Mammary epithelial cell (primary cell): ENCODE measurements at regions of chr4 and their contacts with region 1.

Region 1: GRCh38 chr4:76585897-76586360 is 150.9 kb downstream of the SHROOM3 start:
- DNase-seq: peak; percentile 95
- H3K4me3 ChIP-seq: peak overlapping the region; percentile 67 to 77 (median 67)
- H3K27ac ChIP-seq: peak overlapping the region; percentile 79
- H3K4me1 ChIP-seq: peaks cover 34% of the 10 kb centered on the region
- H3K27me3 ChIP-seq: no peaks in the 10 kb centered on the region
- CTCF ChIP-seq: peak in 1 of 2 donors; percentile 42

Region 2: GRCh38 chr4:76055016-76055415 is 530.9 kb before region 1 on chr4:
- CTCF ChIA-PET with region 1: no interaction called
- dilution Hi-C with region 1: no loop called
- in situ Hi-C with region 1: no loop called
- intact Hi-C with region 1: no loop called
- DNase-seq: no peak
- H3K4me3 ChIP-seq: no peak overlapping the region
- H3K27ac ChIP-seq: no peak overlapping the region
- H3K4me1 ChIP-seq: peaks cover 20% of the 10 kb centered on the region
- H3K27me3 ChIP-seq: no peaks in the 10 kb centered on the region
- CTCF ChIP-seq: no peak

Region 3: DNA sequence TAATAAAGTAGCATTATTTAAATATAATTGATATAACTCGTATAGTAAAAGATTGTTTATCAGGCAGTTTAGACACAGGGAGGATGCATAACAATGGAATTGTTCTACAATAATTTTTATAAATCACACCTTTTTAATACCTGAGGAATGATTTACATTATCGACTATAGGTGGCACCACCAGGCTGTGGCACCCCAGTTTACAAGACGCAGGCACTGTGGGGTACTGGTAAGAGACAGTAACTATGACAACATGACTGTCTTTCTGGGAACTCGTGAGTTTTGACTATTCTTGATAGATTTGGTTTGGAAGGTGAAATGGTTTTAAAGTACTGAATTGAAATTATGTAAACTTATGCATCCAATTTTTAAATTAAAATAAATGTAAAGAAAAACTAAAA is 306.5 kb before region 1 on chr4:
- CTCF ChIA-PET with region 1: no interaction called
- dilution Hi-C with region 1: no loop called
- in situ Hi-C with region 1: no loop called
- intact Hi-C with region 1: no loop called
- DNase-seq: no peak
- H3K4me3 ChIP-seq: no peak overlapping the region
- H3K27ac ChIP-seq: no peak overlapping the region
- H3K4me1 ChIP-seq: no peaks in the 10 kb centered on the region
- H3K27me3 ChIP-seq: peaks cover 1% of the 10 kb centered on the region
- CTCF ChIP-seq: peak in 1 of 2 donors; percentile 26

Region 4: GRCh38 chr4:76377911-76378310 is 208.0 kb before region 1 on chr4:
- CTCF ChIA-PET with region 1: no interaction called
- dilution Hi-C with region 1: no loop called
- in situ Hi-C with region 1: no loop called
- intact Hi-C with region 1: no loop called
- DNase-seq: no peak
- H3K4me3 ChIP-seq: no peak overlapping the region
- H3K27ac ChIP-seq: no peak overlapping the region
- H3K4me1 ChIP-seq: peaks cover 8% of the 10 kb centered on the region
- H3K27me3 ChIP-seq: no peaks in the 10 kb centered on the region
- CTCF ChIP-seq: peak; percentile 47 to 59

Region 5: DNA sequence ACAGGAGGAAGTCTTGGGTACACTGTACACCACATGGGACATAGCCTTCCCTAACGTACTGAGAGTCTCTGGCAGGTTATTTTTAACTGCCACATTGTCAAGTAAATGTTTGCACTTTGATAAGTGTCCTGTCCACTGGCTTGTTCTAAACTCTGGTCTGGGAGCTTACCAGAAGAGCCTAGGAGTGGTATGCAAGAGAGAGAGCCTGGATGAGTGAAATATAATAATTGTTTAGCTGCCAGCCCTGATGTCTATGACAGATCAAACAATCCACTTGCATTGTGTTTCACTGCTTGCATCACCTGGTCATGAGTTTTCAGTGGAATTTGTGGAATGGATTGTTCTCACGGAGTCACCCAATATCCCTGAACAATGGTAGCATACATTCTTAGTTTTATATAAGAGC is 59.3 kb before region 1 on chr4:
- CTCF ChIA-PET with region 1: no interaction called
- dilution Hi-C with region 1: no loop called
- in situ Hi-C with region 1: no loop called
- intact Hi-C with region 1: loop called (anchors 5 kb)
- DNase-seq: peak; percentile 76
- H3K4me3 ChIP-seq: no peak overlapping the region
- H3K27ac ChIP-seq: peak overlapping the region; percentile 60
- H3K4me1 ChIP-seq: peaks cover 17% of the 10 kb centered on the region
- H3K27me3 ChIP-seq: no peaks in the 10 kb centered on the region
- CTCF ChIP-seq: no peak

Region 6: DNA sequence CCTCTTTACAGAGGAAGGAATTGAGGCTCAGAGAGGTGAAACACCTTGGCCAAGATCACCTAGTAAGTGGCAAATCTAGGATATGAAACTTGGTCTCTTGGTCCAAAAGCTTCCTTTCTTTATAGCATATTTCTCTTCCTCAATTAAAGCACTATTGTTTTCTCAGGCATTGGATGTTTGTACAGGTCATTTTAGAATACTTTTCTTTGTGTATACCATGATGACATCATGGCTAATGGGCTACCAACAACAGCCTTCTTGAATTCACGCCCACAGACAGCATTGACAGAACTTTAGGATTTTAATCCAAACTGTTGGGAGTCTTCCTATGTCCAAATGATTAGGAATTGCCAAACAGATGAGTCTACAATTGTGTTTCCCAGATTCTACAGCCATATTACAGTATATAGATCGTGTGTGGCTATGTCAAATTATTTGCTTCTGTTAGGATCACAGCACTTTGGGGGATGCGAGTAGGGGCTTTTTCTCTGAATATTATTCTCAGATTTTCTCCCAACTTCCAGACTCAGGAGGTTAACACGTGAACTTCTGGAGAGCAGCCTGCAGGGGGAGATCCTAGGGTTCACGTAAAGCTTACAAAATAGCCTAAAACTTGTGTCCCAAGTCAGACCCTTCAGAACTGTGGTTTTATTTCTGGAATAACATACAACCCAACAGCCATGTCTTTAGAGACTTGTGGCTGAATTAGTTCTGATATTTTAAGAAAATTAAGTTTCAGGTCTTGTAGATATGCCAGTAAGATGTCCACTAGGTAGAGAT is 40.9 kb after region 1 on chr4:
- CTCF ChIA-PET with region 1: interaction called, 5 read pairs
- dilution Hi-C with region 1: no loop called
- in situ Hi-C with region 1: no loop called
- intact Hi-C with region 1: loop called (anchors 1 kb)
- DNase-seq: no peak
- H3K4me3 ChIP-seq: no peak overlapping the region
- H3K27ac ChIP-seq: no peak overlapping the region
- H3K4me1 ChIP-seq: peaks cover 38% of the 10 kb centered on the region
- H3K27me3 ChIP-seq: no peaks in the 10 kb centered on the region
- CTCF ChIP-seq: peak; percentile 21 to 33

Region 7: DNA sequence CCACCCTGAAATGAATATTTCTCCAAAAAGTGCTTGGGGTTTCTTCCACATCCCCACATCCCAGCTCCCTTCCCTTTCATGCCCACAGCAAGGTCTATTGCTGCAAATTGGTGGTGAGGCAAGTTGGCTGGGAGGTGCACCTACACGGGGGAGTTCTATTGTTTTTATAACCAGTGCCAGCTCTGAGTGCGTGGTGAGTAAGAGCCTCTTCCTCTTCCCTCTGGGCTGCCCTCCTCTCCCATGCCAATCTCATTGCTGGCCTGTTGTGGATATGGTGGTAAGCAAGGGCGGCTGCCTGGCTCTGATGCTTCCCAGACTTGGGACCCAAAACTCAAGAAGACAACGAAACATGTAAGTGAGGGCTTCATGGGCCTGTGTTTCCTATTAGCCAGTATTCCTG is 53.4 kb after region 1 on chr4:
- CTCF ChIA-PET with region 1: no interaction called
- dilution Hi-C with region 1: no loop called
- in situ Hi-C with region 1: no loop called
- intact Hi-C with region 1: loop called (anchors 2 kb)
- DNase-seq: peak; percentile 86
- H3K4me3 ChIP-seq: no peak overlapping the region
- H3K27ac ChIP-seq: peak overlapping the region; percentile 14
- H3K4me1 ChIP-seq: peaks cover 51% of the 10 kb centered on the region
- H3K27me3 ChIP-seq: no peaks in the 10 kb centered on the region
- CTCF ChIP-seq: no peak

Region 8: DNA sequence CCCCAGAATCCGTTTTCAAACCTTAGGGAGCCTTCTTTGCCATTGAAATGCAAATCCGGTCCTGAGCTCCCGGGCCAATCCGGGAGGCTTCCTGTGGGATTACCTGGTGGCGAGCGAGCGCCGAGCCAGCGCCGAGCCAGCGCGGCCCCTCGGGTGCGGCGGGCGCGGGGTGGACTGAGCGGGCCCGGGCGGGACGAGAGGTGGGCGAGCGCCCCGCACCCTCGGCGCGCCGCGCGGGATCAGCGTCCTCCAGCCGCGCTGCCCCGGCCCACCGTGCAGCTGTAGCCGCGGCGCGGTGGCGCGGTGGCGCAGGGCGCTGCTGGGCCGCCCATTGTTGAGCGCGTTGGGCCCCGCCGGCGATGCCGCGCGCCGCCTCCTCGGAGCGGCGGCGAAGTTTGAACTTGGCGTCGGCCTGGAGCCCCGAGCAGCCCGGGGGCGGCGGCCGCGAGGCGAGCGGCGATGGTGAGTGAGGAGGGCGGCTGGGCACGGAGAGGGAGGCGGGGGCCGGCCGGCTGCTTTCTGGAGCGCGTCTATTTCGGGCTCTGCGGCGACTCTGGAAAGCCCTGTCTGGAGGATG is 103.4 kb after region 1 on chr4:
- CTCF ChIA-PET with region 1: no interaction called
- dilution Hi-C with region 1: no loop called
- in situ Hi-C with region 1: no loop called
- intact Hi-C with region 1: loop called (anchors 1 kb)
- DNase-seq: peak; percentile 68
- H3K4me3 ChIP-seq: peak overlapping the region; percentile 69 to 95 (median 77)
- H3K27ac ChIP-seq: peak overlapping the region; percentile 91
- H3K4me1 ChIP-seq: peaks cover 42% of the 10 kb centered on the region
- H3K27me3 ChIP-seq: no peaks in the 10 kb centered on the region
- CTCF ChIP-seq: no peak

Region 9: DNA sequence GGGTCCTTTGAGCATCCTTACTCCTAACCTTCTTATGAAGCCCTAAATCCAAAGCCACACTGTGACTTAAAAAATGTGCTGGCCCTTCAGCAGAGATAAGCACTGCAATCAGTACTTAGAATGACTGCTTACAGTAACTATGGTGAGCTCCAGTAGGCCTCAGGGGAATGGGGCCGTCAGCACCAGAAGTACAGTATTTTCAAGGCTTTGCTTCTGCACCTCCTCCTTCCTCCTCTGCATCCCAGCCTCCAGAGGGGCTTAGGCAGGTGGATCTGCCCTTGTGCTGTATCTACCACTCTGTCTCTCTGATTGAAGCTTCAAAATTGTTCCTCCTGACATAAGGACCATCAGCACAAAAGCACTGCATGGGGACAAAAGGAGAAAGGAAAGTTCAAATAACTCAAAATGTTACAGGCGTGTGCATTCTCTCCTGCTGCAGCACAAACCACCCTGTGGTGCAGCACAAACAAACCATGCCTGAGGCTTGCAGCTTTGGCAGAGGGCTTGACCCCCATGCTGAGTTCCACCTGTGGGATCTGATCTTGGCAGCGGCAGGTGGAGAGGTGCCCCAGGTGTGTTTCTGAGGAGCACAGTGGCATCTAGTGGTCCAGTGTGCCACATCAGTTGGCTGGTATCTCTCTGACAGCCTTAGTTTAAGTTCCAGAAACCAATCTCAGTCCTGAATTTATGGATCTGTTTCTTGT is 147.3 kb after region 1 on chr4:
- CTCF ChIA-PET with region 1: no interaction called
- dilution Hi-C with region 1: no loop called
- in situ Hi-C with region 1: no loop called
- intact Hi-C with region 1: loop called (anchors 5 kb)
- DNase-seq: peak; percentile 34
- H3K4me3 ChIP-seq: no peak overlapping the region
- H3K27ac ChIP-seq: no peak overlapping the region
- H3K4me1 ChIP-seq: peaks cover 4% of the 10 kb centered on the region
- H3K27me3 ChIP-seq: no peaks in the 10 kb centered on the region
- CTCF ChIP-seq: peak; percentile 29 to 50

Region 10: GRCh38 chr4:76748649-76749048 is 162.7 kb after region 1 on chr4:
- CTCF ChIA-PET with region 1: no interaction called
- dilution Hi-C with region 1: no loop called
- in situ Hi-C with region 1: no loop called
- intact Hi-C with region 1: loop called (anchors 1 kb)
- DNase-seq: no peak
- H3K4me3 ChIP-seq: no peak overlapping the region
- H3K27ac ChIP-seq: no peak overlapping the region
- H3K4me1 ChIP-seq: peaks cover 34% of the 10 kb centered on the region
- H3K27me3 ChIP-seq: no peaks in the 10 kb centered on the region
- CTCF ChIP-seq: peak; percentile 32 to 48